ENCODE measurements at regions of chr2 and their contacts with region 1.

Region 1: GRCh38 chr2:220134756-220135534 is 507.5 kb downstream of the SLC4A3 start:
- DNase-seq: no peak
- ATAC-seq: no peak
- H3K4me3 ChIP-seq: no peak overlapping the region
- H3K27ac ChIP-seq: no peak overlapping the region
- H3K4me1 ChIP-seq: no peaks in the 10 kb centered on the region
- H3K27me3 ChIP-seq: no peaks in the 10 kb centered on the region

Region 2: GRCh38 chr2:219939647-219940046 is 195.3 kb before region 1 on chr2:
- intact Hi-C with region 1: no loop called
- DNase-seq: no peak
- ATAC-seq: no peak
- H3K4me3 ChIP-seq: no peak overlapping the region
- H3K27ac ChIP-seq: no peak overlapping the region
- H3K4me1 ChIP-seq: no peaks in the 10 kb centered on the region
- H3K27me3 ChIP-seq: no peaks in the 10 kb centered on the region

Region 3: DNA sequence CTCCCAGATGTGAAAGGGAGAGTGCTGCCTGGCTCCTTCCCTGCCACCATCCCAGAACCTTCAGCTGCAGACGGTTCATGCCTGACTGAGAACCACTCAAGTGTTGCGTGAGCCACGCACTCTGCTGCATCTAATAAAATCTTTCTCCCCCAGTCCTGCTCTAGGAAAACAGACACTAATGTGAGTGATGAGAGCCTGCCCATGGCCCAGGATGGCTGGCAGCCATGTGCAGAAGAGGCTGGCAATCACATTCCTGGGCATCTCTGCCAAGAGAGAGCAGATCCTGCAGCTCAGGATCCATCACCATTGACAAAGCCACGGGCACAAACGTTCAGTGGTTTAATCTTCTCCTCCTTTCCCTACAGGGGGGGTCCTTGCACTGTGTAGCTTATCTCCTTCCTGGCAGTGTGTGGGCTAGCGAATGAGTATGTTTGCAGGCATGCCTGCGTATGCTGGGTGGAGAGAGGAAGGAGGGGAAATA is 30.0 kb before region 1 on chr2:
- intact Hi-C with region 1: loop called in 1 of 4 experiments (anchors 2 kb)
- DNase-seq: peak; percentile 22 to 74 (median 62)
- ATAC-seq: peak; percentile 89
- H3K4me3 ChIP-seq: no peak overlapping the region
- H3K27ac ChIP-seq: no peak overlapping the region
- H3K4me1 ChIP-seq: no peaks in the 10 kb centered on the region
- H3K27me3 ChIP-seq: no peaks in the 10 kb centered on the region

Measured in right cardiac atrium (tissue), 5 donors.